ENCODE measurements at regions of chr2 and their contacts with region 1.

Region 1: GRCh38 chr2:70964596-70965386 is 13.6 kb upstream of the ANKRD53 start:
- DNase-seq: peak; percentile 58
- ATAC-seq: peak; percentile 96
- H3K4me3 ChIP-seq: peak overlapping the region; percentile 40
- H3K27ac ChIP-seq: no peak overlapping the region
- H3K4me1 ChIP-seq: no peaks in the 10 kb centered on the region
- H3K27me3 ChIP-seq: peaks cover 5% of the 10 kb centered on the region; the same call in 1 of the 2 replicates
- CTCF ChIP-seq: peak; percentile 75
- POLR2A ChIP-seq: no peak
- RAD21 ChIP-seq: peak; percentile 63

Region 2: DNA sequence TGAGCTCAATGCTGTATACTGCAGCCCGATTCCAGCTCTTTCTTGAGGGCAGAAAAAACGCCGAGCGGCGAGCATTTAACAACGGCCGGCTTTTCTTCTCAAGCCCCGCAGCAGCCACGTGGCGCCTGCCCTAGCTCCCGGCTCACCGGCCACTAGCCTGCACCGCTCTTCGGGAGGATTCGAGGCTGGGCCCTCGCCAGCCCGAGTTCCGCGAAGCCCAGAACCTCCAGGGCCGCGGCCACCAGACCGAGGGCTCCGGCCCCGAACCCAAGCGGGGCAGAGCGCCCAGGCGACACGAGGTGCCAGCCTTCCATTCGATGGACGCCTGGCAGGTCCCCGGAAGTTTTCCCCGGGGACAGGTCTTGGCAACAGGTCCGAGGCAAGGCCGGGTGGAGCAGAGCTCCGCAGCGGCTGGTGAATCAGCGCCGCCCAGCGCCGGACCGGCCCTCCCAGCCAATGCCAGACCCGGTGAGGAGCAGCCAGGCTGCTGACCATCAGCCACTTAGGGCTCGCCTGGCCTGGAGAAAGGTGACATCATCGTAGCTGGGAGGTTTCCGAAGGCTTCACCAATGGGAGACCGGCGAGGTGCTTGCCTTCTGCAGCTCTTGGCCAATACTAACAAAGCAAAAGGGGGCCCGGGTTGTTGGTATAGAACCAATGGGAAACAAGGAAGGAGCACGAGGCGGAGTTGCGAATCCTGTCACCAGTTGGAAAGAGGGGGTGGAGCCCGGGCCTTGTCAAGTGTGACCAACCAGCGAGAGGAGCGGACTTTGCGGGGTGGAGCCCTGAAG is 1050.4 kb before region 1 on chr2:
- CTCF ChIA-PET with region 1: no interaction called
- POLR2A ChIA-PET with region 1: no interaction called
- dilution Hi-C with region 1: no loop called
- in situ Hi-C with region 1: no loop called
- intact Hi-C with region 1: no loop called
- DNase-seq: peak; percentile 100
- ATAC-seq: peak; percentile 92
- H3K4me3 ChIP-seq: peak overlapping the region; percentile 50
- H3K27ac ChIP-seq: peak overlapping the region; percentile 69
- H3K4me1 ChIP-seq: no peaks in the 10 kb centered on the region; the same call in 1 of the 2 replicates
- H3K27me3 ChIP-seq: no peaks in the 10 kb centered on the region
- CTCF ChIP-seq: no peak; the same call in 1 of the 2 replicates
- POLR2A ChIP-seq: peak; percentile 63
- RAD21 ChIP-seq: no peak; the same call in 1 of the 2 replicates

Region 3: DNA sequence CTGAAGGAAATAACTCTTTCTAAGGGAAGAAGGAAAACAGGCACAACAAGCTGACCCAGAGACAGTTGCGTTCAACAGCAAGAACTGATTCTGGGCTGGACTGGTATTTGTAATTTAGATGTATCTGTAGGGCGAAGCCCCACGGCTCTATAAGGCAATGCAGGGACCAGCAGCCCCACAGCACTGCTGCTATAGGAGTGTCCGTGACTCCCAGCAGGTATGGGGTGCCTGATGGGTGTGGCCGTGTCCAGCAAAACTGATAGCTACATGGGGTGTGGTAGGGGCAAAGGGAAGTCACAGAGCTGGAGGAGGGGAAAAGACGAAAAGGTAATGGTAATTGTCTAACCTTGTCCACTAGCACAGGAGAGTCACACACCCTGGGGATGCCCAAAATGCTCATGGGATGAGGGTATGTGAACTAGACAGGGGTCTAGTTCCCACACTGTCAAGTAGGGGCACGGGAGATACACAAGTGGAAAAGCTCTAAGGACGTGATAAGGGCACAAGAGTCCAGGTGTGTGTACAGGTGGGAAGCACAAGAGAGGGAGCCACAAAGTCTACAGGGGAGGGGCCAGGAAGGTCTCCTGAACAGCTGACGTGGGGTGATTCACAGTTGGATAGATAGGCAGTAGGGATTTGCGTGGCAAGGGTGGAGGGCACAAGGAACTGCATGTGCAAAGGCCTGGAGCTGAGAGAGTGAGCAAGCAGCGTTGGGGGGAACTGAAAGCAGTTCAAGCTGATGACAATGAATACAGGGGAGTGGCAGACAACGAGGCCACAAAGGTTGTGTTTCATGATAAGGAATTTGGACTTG is 954.8 kb before region 1 on chr2:
- CTCF ChIA-PET with region 1: no interaction called
- POLR2A ChIA-PET with region 1: no interaction called
- dilution Hi-C with region 1: no loop called
- in situ Hi-C with region 1: no loop called
- intact Hi-C with region 1: no loop called
- DNase-seq: no peak
- ATAC-seq: no peak
- H3K4me3 ChIP-seq: no peak overlapping the region
- H3K27ac ChIP-seq: no peak overlapping the region
- H3K4me1 ChIP-seq: peaks cover 3% of the 10 kb centered on the region
- H3K27me3 ChIP-seq: no peaks in the 10 kb centered on the region
- CTCF ChIP-seq: no peak
- POLR2A ChIP-seq: no peak
- RAD21 ChIP-seq: no peak

Region 4: GRCh38 chr2:70977605-70978205 is 12.9 kb after region 1 on chr2:
- CTCF ChIA-PET with region 1: interaction called, 5 read pairs
- POLR2A ChIA-PET with region 1: no interaction called
- dilution Hi-C with region 1: no loop called
- in situ Hi-C with region 1: no loop called
- intact Hi-C with region 1: loop called (anchors 1 kb)
- DNase-seq: peak; percentile 93
- ATAC-seq: peak; percentile 18
- H3K4me3 ChIP-seq: no peak overlapping the region; the same call in 1 of the 2 replicates
- H3K27ac ChIP-seq: no peak overlapping the region
- H3K4me1 ChIP-seq: peaks cover 5% of the 10 kb centered on the region; the same call in 1 of the 2 replicates
- H3K27me3 ChIP-seq: no peaks in the 10 kb centered on the region
- CTCF ChIP-seq: no peak
- POLR2A ChIP-seq: 0 out of 2 replicates have a peak, but pooled peaks have one; percentile 11
- RAD21 ChIP-seq: no peak

Region 5: GRCh38 chr2:70994756-70995729 is 30.3 kb after region 1 on chr2 and contains the start of gene TEX261:
- CTCF ChIA-PET with region 1: no interaction called
- POLR2A ChIA-PET with region 1: no interaction called
- dilution Hi-C with region 1: no loop called
- in situ Hi-C with region 1: no loop called
- intact Hi-C with region 1: loop called (anchors 2 kb)
- DNase-seq: peak; percentile 71
- ATAC-seq: peak; percentile 99
- H3K4me3 ChIP-seq: peak within 1 kb of the TSS; percentile 74
- H3K27ac ChIP-seq: peak within 1 kb of the TSS; percentile 49
- H3K4me1 ChIP-seq: peaks cover 11% of the 10 kb centered on the region
- H3K27me3 ChIP-seq: no peaks in the 10 kb centered on the region
- CTCF ChIP-seq: peak; percentile 91
- POLR2A ChIP-seq: no peak
- RAD21 ChIP-seq: peak; percentile 18; the same call in 1 of the 2 replicates
- total RNA-seq, gene TEX261: 26.3 and 31.1 TPM in 2 replicates

Region 6: DNA sequence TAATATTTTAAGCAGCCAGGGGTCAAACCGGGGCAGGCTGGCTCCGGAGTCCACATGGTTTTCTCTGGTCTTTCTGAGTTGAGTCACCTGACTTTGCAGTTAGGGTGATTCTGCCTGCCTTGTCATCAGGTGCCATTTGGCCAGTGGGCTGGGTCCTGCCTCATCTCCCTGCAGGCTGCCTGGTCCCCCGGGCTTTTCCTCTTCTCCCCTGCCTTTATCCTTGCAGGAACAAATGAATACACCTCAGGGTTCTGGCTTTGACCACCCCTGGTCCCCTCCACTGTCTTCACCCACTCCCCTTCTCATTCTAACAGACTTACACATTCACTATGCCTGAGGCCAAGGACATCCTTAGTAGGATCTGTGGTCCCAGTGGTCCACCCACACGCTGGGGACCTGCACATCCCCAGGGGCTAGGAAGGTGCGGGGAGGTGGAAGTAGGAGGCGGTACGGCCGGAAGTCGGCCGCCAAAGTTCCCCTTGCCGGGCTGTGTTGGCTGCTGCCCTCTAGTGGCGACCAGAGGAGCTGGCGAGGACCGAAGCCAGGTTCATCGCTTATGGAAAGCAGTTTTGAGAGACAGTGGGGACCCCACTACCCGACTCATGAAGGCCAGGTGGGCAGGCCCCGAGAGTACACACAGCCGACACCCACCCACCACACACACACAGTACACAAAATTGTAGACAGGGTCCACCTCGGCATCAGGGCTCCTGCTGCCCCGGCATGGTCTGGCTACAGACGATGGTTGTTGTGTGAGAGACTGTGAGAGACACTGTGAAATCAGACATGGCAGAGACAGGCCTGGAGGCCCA is 36.2 kb after region 1 on chr2:
- CTCF ChIA-PET with region 1: interaction called, 4 read pairs
- POLR2A ChIA-PET with region 1: no interaction called
- dilution Hi-C with region 1: no loop called
- in situ Hi-C with region 1: no loop called
- intact Hi-C with region 1: loop called (anchors 1 kb)
- DNase-seq: peak; percentile 60
- ATAC-seq: peak; percentile 96
- H3K4me3 ChIP-seq: peak overlapping the region; percentile 46
- H3K27ac ChIP-seq: no peak overlapping the region
- H3K4me1 ChIP-seq: peaks cover 2% of the 10 kb centered on the region; the same call in 1 of the 2 replicates
- H3K27me3 ChIP-seq: peaks cover 5% of the 10 kb centered on the region; the same call in 1 of the 2 replicates
- CTCF ChIP-seq: peak; percentile 80
- POLR2A ChIP-seq: no peak
- RAD21 ChIP-seq: peak; percentile 54